Adrenal gland (tissue), 19 donors: ENCODE measurements at regions of chr19 and their contacts with region 1.

Region 1: DNA sequence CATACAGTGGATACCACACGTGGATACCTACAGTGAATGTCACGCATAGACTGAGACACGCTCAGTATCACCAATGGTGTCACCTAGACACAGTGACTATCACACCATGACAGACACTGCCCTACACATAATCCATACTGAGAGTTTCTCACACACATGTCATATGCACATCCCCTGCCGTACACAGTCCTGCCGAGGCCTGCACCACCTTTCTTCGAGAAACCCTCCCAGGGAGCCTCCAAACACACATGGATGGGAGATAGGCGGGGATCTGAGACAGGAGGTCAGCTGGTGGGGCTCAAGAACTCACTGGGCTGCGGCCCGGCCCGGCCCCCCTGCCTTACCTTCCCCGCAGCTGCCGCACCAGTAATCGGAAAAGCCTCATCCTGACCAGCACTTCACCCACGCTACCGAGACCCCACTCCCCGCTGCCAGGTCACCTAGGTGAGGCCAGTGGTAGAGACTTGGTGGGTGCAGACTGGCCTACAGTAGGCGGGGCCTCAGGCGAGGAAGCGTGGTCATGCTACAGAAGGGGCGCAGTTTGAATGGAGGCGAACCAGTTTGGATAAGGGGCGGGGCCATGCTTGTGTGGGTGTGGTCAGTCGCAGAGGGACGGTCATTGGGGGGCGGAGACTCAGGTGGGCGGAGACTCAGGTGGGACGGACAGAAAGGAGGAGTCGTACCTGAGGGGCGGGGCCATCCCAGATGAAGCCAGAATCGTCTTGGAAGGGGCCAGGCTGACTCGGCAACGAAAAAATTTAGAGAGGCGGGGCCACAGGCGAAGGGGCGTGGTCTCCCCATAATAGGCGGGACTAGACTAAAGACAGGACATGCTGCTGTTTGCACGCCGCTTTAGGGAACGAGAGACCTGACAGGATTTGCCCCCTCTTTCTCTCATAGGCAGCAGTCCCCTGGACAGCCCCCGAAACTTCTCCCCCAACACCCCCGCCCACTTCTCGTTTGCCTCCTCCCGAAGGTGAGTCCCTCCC is 2.1 kb downstream of the MAST1 start:
- DNase-seq: peak; percentile 64 to 94 (median 85)
- H3K4me3 ChIP-seq: peak overlapping the region in 1 of 4 donors; percentile 45
- H3K27ac ChIP-seq: peak overlapping the region in 1 of 5 donors; percentile 49
- H3K4me1 ChIP-seq: peaks cover 7 to 10% of the 10 kb centered on the region in 2 donors
- H3K27me3 ChIP-seq: peaks cover 80% of the 10 kb centered on the region
- CTCF ChIP-seq: no peak
- POLR2A ChIP-seq: no peak

Region 2: DNA sequence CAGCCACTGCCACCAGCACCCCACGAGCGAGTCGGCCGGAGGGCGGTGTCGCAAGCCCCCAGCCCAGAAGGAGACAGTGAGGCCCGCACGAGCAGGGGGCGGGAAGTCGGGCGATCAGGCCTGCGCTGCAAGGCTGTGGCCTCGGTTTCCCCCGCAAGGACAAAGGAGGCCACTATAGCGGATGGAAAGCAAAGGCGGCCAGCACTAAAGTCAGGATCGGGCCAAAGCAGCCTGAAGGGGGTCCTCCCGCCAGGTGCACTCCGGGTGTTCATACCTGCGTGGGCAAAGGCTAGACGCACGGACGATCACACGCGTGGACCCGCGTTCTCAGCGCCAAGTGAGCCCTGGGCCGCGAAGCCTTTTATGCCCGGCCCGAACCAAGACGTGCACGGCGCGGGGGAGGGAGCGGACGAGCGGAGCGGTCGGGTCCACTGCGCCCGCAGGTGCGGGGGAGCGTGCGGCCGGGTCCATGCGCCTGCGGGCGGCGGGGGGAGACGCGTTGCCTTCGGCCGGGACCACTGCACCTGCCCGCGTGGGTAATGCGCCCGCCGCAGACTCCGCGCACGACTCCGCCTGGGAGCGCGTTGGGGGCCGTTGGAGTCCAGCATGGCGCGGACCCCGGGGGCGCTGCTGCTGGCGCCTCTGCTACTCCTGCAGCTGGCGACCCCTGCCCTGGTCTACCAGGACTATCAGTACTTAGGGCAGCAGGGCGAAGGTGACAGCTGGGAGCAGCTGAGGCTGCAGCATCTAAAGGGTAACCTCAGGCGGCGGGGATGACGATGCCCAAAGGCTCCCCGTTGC is 38.7 kb before region 1 on chr19 and contains the starts of genes PRDX2 and THSD8:
- intact Hi-C with region 1: loop called in 1 of 2 experiments (anchors 5 kb)
- DNase-seq: peak; percentile 81 to 90 (median 87)
- H3K4me3 ChIP-seq: peak within 1 kb of the TSS; percentile 29 to 91 (median 56)
- H3K27ac ChIP-seq: peak within 1 kb of the TSS in 4 of 5 donors; percentile 66 to 88 (median 80)
- H3K4me1 ChIP-seq: peaks cover 6 to 21% of the 10 kb centered on the region in 2 donors
- H3K27me3 ChIP-seq: no peaks in the 10 kb centered on the region
- CTCF ChIP-seq: peak in 4 of 6 experiments; percentile 3 to 24 (median 13)
- POLR2A ChIP-seq: peak; percentile 95
- total RNA-seq, gene PRDX2: 597 to 1,660 (median 849) TPM
- total RNA-seq, gene THSD8: 1.8 to 8.6 (median 4.7) TPM in 5 of 9 donors, not detected in the others

Region 3: GRCh38 chr19:13033819-13034611 is 193.6 kb after region 1 on chr19:
- intact Hi-C with region 1: no loop called
- DNase-seq: peak; percentile 85 to 94 (median 93)
- H3K4me3 ChIP-seq: no peak overlapping the region
- H3K27ac ChIP-seq: peak overlapping the region in 2 of 5 donors; percentile 29 to 50
- H3K4me1 ChIP-seq: peaks cover 13 to 41% of the 10 kb centered on the region in 2 donors
- H3K27me3 ChIP-seq: no peaks in the 10 kb centered on the region
- CTCF ChIP-seq: peak; percentile 64 to 81 (median 78)
- POLR2A ChIP-seq: no peak